Left colon (tissue), 2 donors: ENCODE measurements at regions of chr11 and their contacts with region 1.

Region 1: GRCh38 chr11:35822815-35823495 is 120.9 kb upstream of the LDLRAD3 start:
- DNase-seq: no peak
- ATAC-seq: no peak

Region 2: DNA sequence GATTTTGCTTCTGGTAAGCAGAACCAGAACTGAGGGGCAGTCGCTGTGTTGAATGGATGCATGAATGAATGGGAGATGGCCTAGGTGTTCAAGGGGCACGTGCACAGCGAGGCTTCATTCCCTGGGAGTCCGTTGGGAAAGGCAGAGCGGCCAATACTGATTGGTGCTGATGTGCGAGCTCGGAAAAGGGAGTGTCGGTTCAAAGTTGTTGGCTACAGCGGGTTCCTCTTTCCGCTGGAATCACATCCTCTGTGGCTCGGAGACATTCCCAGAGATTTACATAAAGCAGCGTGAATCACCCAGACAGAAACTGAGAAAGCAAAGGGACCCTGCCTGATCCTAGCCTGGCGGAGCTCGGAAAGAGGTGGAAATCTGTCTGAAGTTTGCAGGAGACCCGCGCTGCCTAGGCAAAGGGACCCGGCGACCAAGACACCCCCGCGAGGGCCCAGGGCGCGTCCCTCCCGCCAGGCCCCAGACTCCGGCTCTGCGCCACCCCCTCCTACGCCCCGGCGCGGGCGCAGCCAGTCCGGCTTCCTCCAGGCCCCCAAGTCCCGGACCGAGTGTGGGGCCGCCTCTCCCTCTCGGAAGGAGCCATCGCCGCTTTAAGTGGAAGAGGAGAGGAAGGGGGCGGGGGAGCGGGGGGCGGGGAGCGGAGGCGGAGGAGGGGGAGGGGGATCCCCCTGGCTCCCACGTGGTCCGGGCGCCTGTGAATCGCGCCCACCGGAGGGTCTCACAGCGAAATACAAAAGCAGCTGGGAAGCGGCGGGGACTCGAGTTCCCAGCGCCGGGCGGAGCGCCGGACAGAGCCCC is 205.1 kb before region 1 on chr11 and contains the start of gene FJX1:
- intact Hi-C with region 1: loop called in 1 of 2 experiments (anchors 5 kb)
- DNase-seq: peak; percentile 23 to 28
- ATAC-seq: peak; percentile 36
- total RNA-seq, gene FJX1: 0.50 TPM in 1 of 2 donors, not detected in the other

Region 3: DNA sequence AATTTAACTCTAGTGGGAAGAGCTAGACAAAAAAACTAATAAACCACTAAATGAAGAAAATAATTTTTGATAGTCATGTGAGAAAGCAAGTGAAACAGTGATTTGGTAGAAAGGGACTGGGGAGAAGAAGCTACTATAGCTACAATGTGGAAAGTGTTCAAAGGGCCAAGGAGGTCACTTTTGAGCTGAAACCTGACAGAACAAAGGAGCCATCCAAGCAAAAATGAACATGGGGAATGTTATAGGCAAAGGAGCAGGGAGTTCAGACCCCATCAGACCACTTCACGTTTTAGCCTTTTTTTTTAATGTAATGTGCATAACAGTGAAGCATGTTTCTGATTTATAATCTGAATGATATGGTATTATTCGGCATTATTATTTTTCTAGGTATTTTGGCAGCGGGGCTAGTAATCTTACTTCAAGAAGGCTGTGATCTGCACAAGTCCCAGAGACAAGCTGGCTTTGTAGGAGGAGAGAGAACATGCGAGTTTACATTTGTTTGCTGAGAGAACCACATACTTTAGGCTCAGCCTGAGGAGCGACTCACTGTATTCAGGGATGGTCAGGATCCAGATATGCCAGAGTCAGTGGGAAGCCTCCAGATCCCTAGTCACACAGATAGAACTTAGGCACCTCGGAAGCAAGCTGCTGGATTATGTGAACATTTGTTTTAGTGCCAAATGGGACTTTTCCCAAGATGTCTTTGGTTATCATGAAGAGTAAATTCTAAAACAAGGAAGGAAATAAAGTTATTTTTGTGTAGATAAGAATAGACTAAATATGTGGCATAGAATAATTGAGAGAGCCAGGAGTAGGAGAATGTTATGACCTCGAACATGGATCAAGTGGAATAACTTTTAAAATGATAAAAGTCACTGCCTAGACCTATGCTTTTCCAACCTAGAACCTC is 41.7 kb before region 1 on chr11:
- intact Hi-C with region 1: no loop called
- DNase-seq: no peak
- ATAC-seq: no peak

Region 4: GRCh38 chr11:35907648-35908431 is 84.9 kb after region 1 on chr11:
- intact Hi-C with region 1: no loop called
- DNase-seq: no peak
- ATAC-seq: peak; percentile 76

Region 5: GRCh38 chr11:36123346-36124101 is 300.6 kb after region 1 on chr11:
- intact Hi-C with region 1: loop called in 1 of 2 experiments (anchors 10 kb)
- DNase-seq: no peak
- ATAC-seq: no peak

Region 6: DNA sequence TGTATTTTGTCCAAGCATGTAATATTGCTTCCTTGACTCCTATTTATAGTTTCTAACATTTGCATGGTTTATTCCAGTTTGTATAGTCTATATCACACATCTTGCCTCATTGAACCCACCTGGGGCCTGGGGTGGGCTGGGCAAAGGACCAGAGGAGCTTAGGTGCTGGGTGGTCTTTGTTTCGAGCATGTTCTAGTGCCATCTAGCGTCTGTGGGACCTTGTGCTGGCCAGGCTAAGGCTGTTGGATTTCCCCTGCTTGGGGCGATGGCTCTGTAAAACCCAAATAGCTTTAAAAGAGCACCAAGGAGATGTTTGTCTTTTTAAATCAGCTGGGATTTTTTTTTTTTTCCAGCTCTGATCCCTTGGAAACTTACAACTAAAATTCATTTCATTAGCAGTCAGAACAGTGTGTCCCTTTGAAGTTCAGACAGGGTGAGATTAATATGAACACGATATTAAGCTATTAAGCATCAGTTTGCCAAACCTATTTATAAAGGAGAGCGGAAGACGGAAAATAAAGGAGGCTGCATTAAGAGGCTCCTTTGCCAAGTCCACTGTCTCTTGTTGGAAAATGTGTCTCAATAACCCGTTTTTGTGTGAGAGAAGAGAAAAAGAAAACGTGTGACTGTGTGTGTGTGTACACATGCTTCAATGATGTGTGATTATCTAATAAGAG is 308.9 kb after region 1 on chr11:
- intact Hi-C with region 1: loop called (anchors 10 kb)
- DNase-seq: peak in 1 of 2 donors; percentile 20
- ATAC-seq: peak; percentile 33

Region 7: DNA sequence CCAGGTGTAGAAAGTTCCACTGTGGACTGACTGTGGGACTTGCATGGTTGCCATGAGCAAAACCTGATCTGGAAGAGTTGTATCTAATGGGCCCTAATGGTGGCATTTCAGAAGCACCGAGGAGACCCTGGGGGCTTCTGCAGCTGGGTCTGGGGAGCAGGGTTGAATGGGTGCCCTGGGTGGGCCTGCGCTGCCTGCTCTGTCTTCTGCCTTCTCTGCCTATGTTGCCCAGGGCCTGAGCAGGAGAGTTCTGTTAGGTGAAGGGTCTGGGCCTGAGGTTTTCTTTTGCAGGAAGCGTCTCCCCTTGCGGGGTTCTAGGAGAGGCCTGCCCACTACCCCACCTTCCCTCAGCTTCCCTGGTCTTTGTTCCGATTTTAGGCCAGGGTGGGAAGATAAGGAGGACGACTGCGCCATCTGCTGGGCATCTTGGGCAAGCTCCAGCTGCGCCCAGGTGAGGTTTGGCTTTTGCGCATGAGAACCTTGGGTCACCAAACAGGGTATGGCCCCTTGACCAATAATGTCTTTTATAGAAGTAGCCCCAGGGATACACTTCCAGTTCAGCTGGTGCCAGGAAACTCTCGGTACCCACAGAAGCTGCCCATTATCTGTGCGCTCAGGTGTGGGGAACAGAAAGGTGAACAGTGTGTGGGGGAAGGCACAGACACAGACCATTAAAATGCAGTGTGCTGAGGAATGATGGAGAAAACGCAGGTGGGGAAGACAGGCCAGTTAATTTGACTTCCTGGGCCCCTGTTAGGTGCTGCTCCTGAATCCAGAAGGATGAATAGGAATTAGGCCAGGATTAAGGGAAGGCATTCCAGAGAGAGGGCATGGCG is 443.1 kb after region 1 on chr11:
- intact Hi-C with region 1: loop called in 1 of 2 experiments (anchors 10 kb)
- DNase-seq: peak in 1 of 2 donors; percentile 69
- ATAC-seq: peak; percentile 82